Caco-2 (cell line): ENCODE measurements at regions of chr4 and their contacts with region 1.

Region 1: GRCh38 chr4:6783053-6783981 is 790 bp downstream of the KIAA0232 start:
- DNase-seq: peak; percentile 90 to 94
- H3K4me3 ChIP-seq: peak overlapping the region; percentile 97
- H3K4me3 Mint-ChIP-seq: peak overlapping the region; percentile 75
- H3K27ac Mint-ChIP-seq: peak overlapping the region; percentile 72
- H3K4me1 ChIP-seq: no peaks in the 10 kb centered on the region
- H3K4me1 Mint-ChIP-seq: peaks cover 19% of the 10 kb centered on the region
- H3K27me3 ChIP-seq: no peaks in the 10 kb centered on the region
- H3K27me3 Mint-ChIP-seq: no peaks in the 10 kb centered on the region
- CTCF ChIP-seq: peak in 1 of 2 experiments; percentile 29

Region 2: GRCh38 chr4:6873792-6874461 is 90.6 kb after region 1 on chr4:
- CTCF ChIA-PET with region 1: interaction called, 5 read pairs
- POLR2A ChIA-PET with region 1: no interaction called
- intact Hi-C with region 1: loop called (anchors 2 kb)
- DNase-seq: peak; percentile 57 to 68
- H3K4me3 ChIP-seq: no peak overlapping the region
- H3K4me3 Mint-ChIP-seq: no peak overlapping the region
- H3K27ac Mint-ChIP-seq: no peak overlapping the region
- H3K4me1 ChIP-seq: no peaks in the 10 kb centered on the region
- H3K4me1 Mint-ChIP-seq: no peaks in the 10 kb centered on the region
- H3K27me3 ChIP-seq: no peaks in the 10 kb centered on the region
- H3K27me3 Mint-ChIP-seq: no peaks in the 10 kb centered on the region
- CTCF ChIP-seq: peak; percentile 74 to 77